ENCODE measurements at regions of chr14 and their contacts with region 1.

Region 1: DNA sequence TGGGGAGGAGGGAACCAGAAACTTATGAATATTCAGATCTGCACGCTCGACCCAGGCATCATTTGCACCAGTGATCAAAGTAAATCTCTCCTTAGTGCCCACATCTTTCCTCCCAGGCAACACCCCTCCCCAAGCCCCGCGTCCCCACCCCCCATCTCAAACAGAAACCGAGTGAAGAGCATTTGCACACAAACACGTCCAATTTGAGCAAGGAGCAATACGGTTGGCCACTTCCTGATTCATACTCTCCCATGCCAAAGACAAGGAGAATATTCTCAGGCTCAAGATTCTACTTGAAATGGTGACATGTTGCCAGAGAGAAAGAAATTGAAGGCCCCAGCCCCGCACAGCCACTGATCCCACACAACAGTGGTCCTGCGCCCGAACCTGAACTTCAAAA is 7.1 kb downstream of the FOXN3 start:
- DNase-seq: no peak
- ATAC-seq: no peak
- H3K4me3 ChIP-seq: no peak overlapping the region
- H3K4me3 Mint-ChIP-seq: peak overlapping the region; percentile 25
- H3K27ac ChIP-seq: no peak overlapping the region
- H3K27ac Mint-ChIP-seq: no peak overlapping the region
- H3K4me1 ChIP-seq: peaks cover 38% of the 10 kb centered on the region
- H3K4me1 Mint-ChIP-seq: peaks cover 82% of the 10 kb centered on the region
- H3K27me3 ChIP-seq: no peaks in the 10 kb centered on the region
- H3K27me3 Mint-ChIP-seq: no peaks in the 10 kb centered on the region
- CTCF ChIP-seq: no peak

Region 2: DNA sequence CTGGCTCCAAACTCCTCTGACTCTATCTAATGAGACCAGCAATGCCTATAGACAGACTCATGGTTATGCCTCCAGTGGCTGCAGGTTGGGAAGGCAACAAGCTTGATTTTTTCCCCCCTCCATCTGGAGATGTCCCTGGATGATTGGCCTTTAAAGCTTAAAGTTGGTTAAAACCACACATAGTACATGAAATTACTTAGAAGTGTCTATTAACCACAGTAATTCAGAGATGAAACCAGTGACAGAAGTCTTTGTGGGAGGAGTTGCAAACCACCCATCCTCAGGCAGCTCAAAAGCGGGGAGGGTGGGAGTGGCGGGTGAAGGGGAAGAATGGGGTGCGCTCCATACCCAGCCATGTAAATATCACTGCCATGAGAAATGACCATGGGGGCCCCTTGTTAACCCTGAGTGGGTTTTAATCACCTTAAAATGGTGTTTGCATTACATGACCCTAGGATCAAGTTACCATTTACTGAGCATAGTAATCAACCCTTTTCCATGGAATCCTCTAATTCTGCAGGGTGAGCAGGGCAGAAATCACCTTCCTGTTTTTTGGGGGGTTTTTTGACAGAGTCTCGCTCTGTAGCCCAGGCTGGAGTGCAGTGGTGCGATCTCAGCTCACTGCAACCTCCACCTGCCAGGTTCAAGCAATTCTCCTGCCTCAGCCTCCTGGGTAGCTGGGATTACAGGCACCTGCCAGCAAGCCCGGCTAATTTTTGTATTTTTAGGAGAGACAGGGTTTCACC is 126.5 kb before region 1 on chr14:
- CTCF ChIA-PET with region 1: no interaction called
- POLR2A ChIA-PET with region 1: no interaction called
- intact Hi-C with region 1: no loop called
- DNase-seq: peak in 1 of 14 experiments; percentile 40
- ATAC-seq: no peak
- H3K4me3 ChIP-seq: no peak overlapping the region
- H3K4me3 Mint-ChIP-seq: no peak overlapping the region
- H3K27ac ChIP-seq: no peak overlapping the region
- H3K27ac Mint-ChIP-seq: peak overlapping the region; percentile 39
- H3K4me1 ChIP-seq: peaks cover 19% of the 10 kb centered on the region
- H3K4me1 Mint-ChIP-seq: peaks cover 73% of the 10 kb centered on the region
- H3K27me3 ChIP-seq: no peaks in the 10 kb centered on the region
- H3K27me3 Mint-ChIP-seq: no peaks in the 10 kb centered on the region
- CTCF ChIP-seq: no peak

Region 3: DNA sequence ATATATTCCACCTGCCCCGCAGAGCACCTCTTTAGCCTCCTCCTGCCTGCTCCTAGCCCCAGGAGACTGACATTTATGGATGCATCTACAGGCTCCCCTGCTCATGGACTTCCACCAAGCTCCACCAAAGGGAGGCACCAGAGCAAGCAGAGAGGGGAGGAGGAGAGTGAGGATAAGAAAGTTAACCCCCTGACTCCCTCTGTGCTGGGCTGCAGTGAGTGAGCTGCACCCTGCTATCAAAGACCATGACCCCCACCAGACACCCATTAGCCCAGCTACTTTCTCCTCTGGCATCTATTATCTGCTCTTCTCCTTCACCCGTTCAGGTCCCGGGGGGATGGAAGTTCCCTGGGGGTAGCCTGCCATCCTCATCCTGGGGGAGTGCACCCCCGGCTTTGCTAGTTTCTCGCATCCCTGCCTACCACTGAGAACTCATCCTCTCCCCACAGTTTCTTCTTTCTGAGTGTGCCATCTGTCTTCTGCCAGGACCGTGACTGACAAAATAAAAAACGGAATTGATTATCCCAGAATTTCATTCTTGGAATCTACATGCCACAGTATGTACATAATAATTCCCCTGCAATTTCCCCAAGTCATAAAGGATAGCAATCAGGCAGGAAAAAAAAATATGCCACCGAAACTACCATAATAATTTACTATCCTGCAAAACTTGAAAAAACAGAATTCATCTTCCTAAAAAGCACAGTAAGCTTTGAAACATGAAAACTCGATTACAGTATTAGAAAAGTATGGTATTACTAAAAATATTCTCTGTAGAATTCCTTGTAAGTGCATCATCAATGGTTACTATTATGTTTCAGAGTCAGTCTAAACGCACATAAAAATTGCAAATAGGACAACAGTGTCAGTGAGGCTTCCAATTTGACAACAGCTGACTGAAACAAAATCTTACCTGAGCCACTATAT is 38.1 kb before region 1 on chr14:
- CTCF ChIA-PET with region 1: no interaction called
- POLR2A ChIA-PET with region 1: no interaction called
- intact Hi-C with region 1: loop called in 1 of 2 experiments (anchors 5 kb)
- DNase-seq: no peak
- ATAC-seq: no peak
- H3K4me3 ChIP-seq: no peak overlapping the region
- H3K4me3 Mint-ChIP-seq: no peak overlapping the region
- H3K27ac ChIP-seq: no peak overlapping the region
- H3K27ac Mint-ChIP-seq: peak overlapping the region; percentile 66
- H3K4me1 ChIP-seq: peaks cover 20% of the 10 kb centered on the region
- H3K4me1 Mint-ChIP-seq: peaks cover 68% of the 10 kb centered on the region
- H3K27me3 ChIP-seq: no peaks in the 10 kb centered on the region
- H3K27me3 Mint-ChIP-seq: no peaks in the 10 kb centered on the region
- CTCF ChIP-seq: no peak